Stomach (tissue), 19 donors: ENCODE measurements at regions of chr12 and their contacts with region 1.

Region 1: DNA sequence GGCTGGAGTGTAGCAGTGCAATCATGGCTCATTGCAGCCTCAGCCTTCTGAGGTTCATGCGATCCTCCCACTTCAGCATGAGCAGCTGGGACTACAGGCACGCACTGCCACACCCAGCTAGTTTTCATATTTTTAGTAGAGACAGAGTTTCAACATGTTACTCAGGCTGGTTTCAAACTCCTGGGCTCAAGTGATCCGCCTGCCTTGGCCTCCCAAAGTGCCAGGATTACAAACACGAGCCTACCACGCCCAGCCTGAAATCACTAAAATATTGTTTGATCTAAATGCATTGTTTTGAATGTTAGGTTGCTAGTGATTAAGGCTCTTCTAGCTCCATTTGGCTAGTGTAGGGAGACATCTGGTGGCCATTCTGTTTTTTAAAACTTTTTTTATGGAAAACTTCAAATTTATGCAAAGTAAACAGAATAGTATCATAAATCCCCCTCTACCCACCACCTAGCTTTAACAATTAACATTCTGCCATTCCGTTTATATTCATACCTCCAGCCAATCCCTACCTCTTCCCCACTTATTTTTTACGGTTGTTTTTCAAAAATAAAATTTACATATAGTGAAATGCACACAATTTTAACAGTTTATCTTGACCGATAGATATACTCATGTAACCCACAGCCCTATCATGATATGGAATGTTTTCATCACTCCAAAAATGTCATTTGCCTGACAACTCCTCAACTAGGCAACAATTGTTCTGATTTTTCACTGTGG is 37.8 kb downstream of the MYO1H start:
- DNase-seq: peak in 1 of 2 donors; percentile 68
- H3K4me3 ChIP-seq: no peak overlapping the region
- H3K27ac ChIP-seq: no peak overlapping the region
- H3K4me1 ChIP-seq: peaks cover 0 to 15% (median 7%) of the 10 kb centered on the region in 4 donors
- H3K27me3 ChIP-seq: peaks cover 0 to under 1% (median 0%) of the 10 kb centered on the region in 3 donors
- CTCF ChIP-seq: peak in 4 of 7 experiments; percentile 23 to 52 (median 27)
- EP300 ChIP-seq: no peak
- POLR2A ChIP-seq: no peak

Region 2: DNA sequence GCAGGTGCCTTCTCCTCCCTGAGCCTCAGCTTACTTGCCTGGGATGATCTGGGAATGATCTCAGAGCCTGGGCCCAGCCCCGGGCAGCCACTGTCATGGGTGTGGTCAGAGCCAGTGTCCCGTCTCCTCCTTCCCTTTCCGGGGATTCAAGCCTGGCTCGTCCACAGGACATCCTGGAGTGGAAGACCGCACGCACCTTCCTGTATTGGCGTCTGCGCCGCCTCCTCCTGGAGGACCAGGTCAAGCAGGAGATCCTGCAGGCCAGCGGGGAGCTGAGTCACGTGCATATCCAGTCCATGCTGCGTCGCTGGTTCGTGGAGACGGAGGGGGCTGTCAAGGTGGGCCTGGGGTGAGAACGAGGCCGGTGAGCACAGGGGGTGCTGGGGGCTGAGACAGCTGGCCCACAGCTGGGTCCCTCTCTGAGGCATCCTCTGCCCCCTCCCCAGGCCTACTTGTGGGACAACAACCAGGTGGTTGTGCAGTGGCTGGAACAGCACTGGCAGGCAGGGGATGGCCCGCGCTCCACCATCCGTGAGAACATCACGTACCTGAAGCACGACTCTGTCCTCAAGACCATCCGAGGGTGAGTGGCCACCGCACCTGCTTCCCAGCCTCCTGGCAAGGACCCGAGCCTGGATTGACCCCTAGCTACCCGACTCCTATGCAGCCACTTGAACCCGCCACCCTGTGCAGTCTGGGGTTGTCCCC is 120.4 kb before region 1 on chr12:
- intact Hi-C with region 1: loop called (anchors 5 kb)
- DNase-seq: no peak
- H3K4me3 ChIP-seq: no peak overlapping the region
- H3K27ac ChIP-seq: peak overlapping the region in 1 of 5 donors; percentile 23
- H3K4me1 ChIP-seq: no peaks in the 10 kb centered on the region
- H3K27me3 ChIP-seq: no peaks in the 10 kb centered on the region
- CTCF ChIP-seq: no peak
- EP300 ChIP-seq: no peak
- POLR2A ChIP-seq: no peak

Region 3: DNA sequence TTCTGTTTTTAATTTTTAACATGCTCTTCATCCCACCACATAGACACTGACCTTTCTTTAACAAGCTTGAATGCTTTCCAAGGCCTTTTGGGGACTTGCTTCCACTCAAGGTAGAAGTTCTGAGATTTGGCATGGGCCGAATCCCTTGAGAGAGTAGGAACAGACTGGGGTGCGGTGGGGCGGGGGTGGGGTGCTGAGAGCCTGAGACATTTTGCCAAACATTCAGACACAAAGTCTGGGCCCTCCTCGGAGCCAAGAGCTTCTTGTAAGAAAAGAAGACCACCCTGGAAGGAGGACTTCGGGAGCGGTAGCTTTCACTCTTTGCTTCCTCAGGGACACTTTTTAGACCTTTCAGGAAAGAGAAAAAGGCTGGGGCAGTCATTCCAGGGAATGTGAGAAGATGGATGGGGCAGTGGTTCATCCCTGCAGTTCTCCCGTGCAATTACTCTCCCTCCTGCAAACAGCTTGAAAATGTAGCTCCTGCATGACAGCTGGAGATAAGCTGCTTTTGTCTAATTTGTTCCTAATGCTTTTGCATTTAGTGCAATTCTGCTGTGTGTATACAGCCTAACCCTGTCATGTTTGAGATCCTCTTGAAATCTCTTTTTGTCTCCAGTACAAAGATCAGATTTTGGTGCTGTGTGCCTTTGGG is 54.1 kb before region 1 on chr12:
- intact Hi-C with region 1: no loop called
- DNase-seq: peak in 1 of 2 donors; percentile 31
- H3K4me3 ChIP-seq: no peak overlapping the region
- H3K27ac ChIP-seq: no peak overlapping the region
- H3K4me1 ChIP-seq: peaks cover 0 to 7% (median 0%) of the 10 kb centered on the region in 4 donors
- H3K27me3 ChIP-seq: peaks cover 0 to 17% (median 0%) of the 10 kb centered on the region in 3 donors
- CTCF ChIP-seq: no peak
- EP300 ChIP-seq: no peak
- POLR2A ChIP-seq: no peak